ENCODE measurements at regions of chr6 and their contacts with region 1.

Region 1: DNA sequence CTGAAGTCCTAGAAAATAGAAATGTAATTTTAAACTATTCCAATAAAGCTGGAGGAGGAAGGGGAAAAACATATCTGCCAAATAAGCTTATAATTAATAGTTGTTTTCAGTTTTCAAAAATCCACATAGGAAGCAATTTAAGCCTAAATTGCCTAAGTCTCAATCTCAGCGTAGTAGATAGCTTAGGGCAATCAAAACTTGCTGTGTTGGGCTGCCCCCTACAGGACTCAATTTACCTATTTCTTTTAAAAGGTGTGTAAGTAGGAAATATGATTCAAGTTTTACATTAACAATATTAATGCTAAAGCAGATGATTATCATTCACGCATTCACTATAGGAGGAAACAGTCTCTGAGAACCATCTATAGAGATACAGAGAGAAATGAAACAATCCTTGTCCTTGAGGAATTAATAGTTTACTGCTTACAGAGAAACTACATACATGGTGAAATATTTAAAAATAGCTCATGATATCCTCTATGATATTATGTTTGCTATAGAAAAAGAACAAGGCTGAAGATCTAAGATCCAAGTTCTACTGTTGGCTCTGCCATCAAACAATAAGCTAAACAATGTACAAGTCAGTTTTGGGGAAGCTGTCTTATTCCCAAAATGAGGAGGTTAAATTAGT is 102.1 kb downstream of the ATG5 start:
- DNase-seq: peak in 1 of 2 donors; percentile 21
- ATAC-seq: peak in 3 of 4 donors; percentile 54 to 81 (median 73)
- H3K4me3 ChIP-seq: no peak overlapping the region
- H3K27ac ChIP-seq: no peak overlapping the region
- H3K4me1 ChIP-seq: peaks cover 7% of the 10 kb centered on the region
- H3K27me3 ChIP-seq: no peaks in the 10 kb centered on the region
- CTCF ChIP-seq: peak; percentile 71

Region 2: GRCh38 chr6:105437236-105437635 is 786.2 kb before region 1 on chr6:
- intact Hi-C with region 1: loop called in 1 of 2 experiments (anchors 5 kb)
- DNase-seq: no peak
- ATAC-seq: no peak
- H3K4me3 ChIP-seq: no peak overlapping the region
- H3K27ac ChIP-seq: no peak overlapping the region
- H3K4me1 ChIP-seq: no peaks in the 10 kb centered on the region
- H3K27me3 ChIP-seq: no peaks in the 10 kb centered on the region
- CTCF ChIP-seq: no peak

Region 3: GRCh38 chr6:105484238-105485161 is 738.9 kb before region 1 on chr6:
- intact Hi-C with region 1: loop called (anchors 5 to 10 kb)
- DNase-seq: no peak
- ATAC-seq: peak in 2 of 4 donors; percentile 23 to 70
- H3K4me3 ChIP-seq: peak overlapping the region; percentile 5
- H3K27ac ChIP-seq: no peak overlapping the region
- H3K4me1 ChIP-seq: no peaks in the 10 kb centered on the region
- H3K27me3 ChIP-seq: no peaks in the 10 kb centered on the region
- CTCF ChIP-seq: peak; percentile 84

Region 4: GRCh38 chr6:105733565-105734162 is 489.8 kb before region 1 on chr6:
- intact Hi-C with region 1: loop called in 1 of 2 experiments (anchors 2 kb)
- DNase-seq: no peak
- ATAC-seq: no peak
- H3K4me3 ChIP-seq: no peak overlapping the region
- H3K27ac ChIP-seq: no peak overlapping the region
- H3K4me1 ChIP-seq: no peaks in the 10 kb centered on the region
- H3K27me3 ChIP-seq: no peaks in the 10 kb centered on the region
- CTCF ChIP-seq: peak; percentile 63

Region 5: DNA sequence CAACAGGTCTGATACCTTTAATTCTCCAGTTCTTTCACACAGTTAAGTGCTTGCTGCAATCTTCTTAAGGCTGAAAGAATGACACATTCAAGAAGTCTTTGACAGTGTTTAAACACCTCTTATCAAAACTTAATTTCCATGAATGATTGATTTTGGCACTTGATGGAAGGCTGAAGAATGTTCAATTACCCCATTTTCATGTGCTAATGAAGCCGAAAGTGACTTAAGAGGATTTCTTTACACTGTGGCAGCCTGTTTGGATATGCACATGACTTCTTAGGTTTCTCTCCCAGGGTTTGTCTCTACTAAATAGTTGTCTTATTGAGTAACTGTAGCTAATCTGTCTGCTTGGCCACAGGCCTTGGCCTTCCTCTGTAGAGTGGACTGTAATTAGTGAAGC is 218.4 kb before region 1 on chr6:
- intact Hi-C with region 1: loop called in 1 of 2 experiments (anchors 10 kb)
- DNase-seq: no peak
- ATAC-seq: no peak
- H3K4me3 ChIP-seq: no peak overlapping the region
- H3K27ac ChIP-seq: no peak overlapping the region
- H3K4me1 ChIP-seq: no peaks in the 10 kb centered on the region
- H3K27me3 ChIP-seq: peaks cover 0 to 11% (median 0%) of the 10 kb centered on the region in 3 donors
- CTCF ChIP-seq: no peak

Measured in psoas muscle (tissue), 8 donors.